ENCODE measurements at regions of chr17 and their contacts with region 1.

Region 1: DNA sequence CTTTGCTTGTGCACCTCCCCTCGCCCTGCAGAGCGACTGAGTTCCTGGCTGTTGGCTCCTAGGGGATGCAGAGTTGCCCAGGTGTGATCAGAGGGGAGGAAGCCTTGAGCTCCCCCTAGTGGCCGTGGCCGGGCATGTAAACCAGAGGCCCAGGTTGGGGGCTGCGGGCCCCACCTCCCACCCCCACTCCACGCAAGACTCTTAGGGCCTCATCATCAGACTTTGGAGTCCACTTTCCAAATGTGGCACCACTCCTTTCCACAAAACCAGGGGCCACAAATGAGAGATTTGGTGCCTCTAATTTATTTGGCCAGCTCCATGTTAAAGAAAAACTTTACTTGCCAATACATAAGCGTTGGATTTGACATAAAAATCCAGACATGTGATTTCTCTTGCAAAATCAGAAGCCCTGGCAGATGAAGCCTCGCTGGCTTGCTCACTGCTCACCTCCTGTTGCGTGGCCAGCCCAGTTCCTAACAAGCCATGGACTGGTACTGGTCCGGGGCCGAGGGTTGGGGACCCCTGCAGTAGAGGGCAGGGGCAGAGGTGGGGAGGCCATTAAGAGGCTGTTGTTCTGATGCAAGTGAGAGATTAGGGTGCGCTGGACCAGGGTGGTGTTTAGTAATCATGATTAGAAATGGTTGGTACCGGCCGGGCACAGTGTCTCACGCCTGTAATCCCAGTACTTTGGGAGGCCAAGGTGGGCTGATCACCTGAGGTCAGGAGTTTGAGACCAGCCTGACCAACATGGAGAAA is 28.7 kb upstream of the GAS7 start:
- DNase-seq: peak; percentile 74
- ATAC-seq: peak; percentile 69
- H3K4me3 Mint-ChIP-seq: no peak overlapping the region
- H3K27ac Mint-ChIP-seq: no peak overlapping the region
- H3K4me1 Mint-ChIP-seq: no peaks in the 10 kb centered on the region
- H3K27me3 Mint-ChIP-seq: no peaks in the 10 kb centered on the region

Region 2: GRCh38 chr17:9924735-9925191 is 302.3 kb before region 1 on chr17:
- CTCF ChIA-PET with region 1: interaction called, 4 read pairs
- POLR2A ChIA-PET with region 1: no interaction called
- intact Hi-C with region 1: loop called in 1 of 2 experiments (anchors 1 kb)
- DNase-seq: no peak
- ATAC-seq: peak; percentile 58
- H3K4me3 Mint-ChIP-seq: no peak overlapping the region
- H3K27ac Mint-ChIP-seq: no peak overlapping the region
- H3K4me1 Mint-ChIP-seq: no peaks in the 10 kb centered on the region
- H3K27me3 Mint-ChIP-seq: no peaks in the 10 kb centered on the region

Region 3: DNA sequence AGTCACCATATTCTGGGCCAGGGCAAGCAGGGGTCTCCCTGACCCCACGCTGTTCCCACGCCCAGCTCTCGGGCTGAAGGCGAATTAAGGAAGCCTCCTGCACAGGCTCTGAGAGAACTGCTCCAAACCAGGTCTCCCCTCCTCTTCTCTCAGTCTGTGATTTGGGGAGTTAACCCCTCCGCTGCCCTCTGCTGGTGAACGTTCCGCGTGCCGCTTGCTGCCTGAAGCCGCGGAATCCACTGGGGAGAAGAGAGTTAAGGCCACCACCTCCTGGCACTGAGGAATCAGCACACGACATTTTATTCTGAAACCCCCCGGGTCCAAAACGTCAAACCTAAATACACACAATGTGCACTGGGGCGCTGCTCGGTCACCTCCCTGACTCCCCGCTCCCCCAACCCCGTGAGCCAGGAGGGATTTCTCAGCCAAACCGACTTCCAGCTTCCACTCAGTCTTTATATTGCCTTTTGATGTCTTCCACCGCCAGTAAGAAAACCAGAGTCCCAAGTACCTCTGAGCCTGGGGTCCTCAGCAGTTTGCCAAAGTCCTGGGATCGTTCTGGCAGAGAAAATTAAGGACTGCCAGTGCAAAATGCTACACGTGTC is 267.6 kb before region 1 on chr17:
- CTCF ChIA-PET with region 1: no interaction called
- POLR2A ChIA-PET with region 1: no interaction called
- intact Hi-C with region 1: loop called in 1 of 2 experiments (anchors 2 kb)
- DNase-seq: peak; percentile 71
- ATAC-seq: no peak
- H3K4me3 Mint-ChIP-seq: no peak overlapping the region
- H3K27ac Mint-ChIP-seq: no peak overlapping the region
- H3K4me1 Mint-ChIP-seq: no peaks in the 10 kb centered on the region
- H3K27me3 Mint-ChIP-seq: peaks cover 4% of the 10 kb centered on the region

Region 4: DNA sequence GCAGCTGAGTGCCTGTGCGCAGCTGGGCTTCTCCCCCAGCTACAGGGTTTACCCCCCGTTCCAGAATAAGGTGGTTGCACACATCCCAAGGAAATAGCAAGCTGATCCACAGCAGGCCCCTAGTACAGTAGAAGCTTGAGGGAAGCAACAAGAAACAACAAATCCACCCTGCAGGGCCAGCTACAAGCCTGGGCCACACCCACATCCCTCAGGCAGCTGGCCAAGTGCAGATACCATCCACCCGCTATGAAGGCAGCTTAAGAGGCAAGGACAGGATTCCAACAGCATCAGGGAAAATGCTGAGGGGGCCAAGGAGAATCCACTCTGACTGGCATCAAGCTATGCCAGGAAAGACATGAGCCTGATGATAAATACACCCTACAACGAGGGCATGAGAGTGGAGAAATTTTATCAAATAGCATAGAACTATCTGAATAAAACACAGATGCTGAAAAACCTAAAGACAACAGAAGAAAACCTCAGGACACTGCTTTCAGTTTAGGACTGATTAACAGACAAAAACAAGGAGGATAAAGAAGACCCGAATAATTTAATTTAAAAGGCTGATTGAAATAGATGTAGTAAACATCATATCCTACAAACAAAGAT is 255.0 kb before region 1 on chr17:
- CTCF ChIA-PET with region 1: interaction called, 5 read pairs
- POLR2A ChIA-PET with region 1: no interaction called
- intact Hi-C with region 1: loop called in 1 of 2 experiments (anchors 1 kb)
- DNase-seq: no peak
- ATAC-seq: no peak
- H3K4me3 Mint-ChIP-seq: no peak overlapping the region
- H3K27ac Mint-ChIP-seq: no peak overlapping the region
- H3K4me1 Mint-ChIP-seq: peaks cover under 1% of the 10 kb centered on the region
- H3K27me3 Mint-ChIP-seq: no peaks in the 10 kb centered on the region

Region 5: DNA sequence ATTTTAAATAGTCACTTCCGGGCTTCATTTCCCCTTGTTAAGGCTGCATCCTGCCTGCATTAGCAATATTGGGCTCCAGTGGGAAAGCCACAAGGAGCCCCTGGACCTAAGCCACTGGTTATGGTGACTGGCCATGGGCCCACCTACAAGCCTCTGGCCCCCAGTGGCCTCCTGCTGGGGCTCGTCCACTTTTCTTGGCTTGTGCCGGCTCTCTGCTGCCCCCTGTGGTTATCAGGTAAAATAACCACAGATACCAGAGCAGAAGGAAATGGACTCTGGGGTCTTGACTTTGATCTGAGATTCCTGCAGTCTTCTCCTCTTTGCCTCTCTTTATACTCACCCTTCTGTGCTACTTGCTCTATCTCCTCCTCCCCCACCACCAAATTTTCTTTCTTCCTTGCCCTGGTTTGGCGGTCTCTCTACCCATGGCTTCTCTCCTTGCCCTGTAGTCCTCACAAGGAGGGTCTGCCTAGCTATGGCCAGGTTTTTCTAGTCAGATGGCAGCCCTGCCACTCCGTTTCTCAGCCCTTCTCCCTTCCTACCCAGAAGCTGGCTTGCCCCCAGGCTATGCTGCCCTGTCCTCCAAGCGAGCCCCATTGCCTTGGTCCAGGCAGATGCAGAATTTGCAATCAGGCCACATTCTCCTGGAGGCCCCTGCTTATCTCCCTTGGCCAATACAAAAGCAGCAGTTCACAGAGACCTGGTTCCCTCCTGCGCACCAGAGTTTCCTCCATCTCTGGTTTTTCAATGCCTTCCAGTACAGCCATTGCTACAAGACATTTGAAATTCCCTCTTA is 239.1 kb before region 1 on chr17:
- CTCF ChIA-PET with region 1: no interaction called
- POLR2A ChIA-PET with region 1: no interaction called
- intact Hi-C with region 1: loop called in 1 of 2 experiments (anchors 5 kb)
- DNase-seq: peak; percentile 41
- ATAC-seq: no peak
- H3K4me3 Mint-ChIP-seq: no peak overlapping the region
- H3K27ac Mint-ChIP-seq: no peak overlapping the region
- H3K4me1 Mint-ChIP-seq: no peaks in the 10 kb centered on the region
- H3K27me3 Mint-ChIP-seq: no peaks in the 10 kb centered on the region

Region 6: GRCh38 chr17:10041916-10042588 is 185.1 kb before region 1 on chr17:
- CTCF ChIA-PET with region 1: no interaction called
- POLR2A ChIA-PET with region 1: no interaction called
- intact Hi-C with region 1: loop called in 1 of 2 experiments (anchors 5 kb)
- DNase-seq: no peak
- ATAC-seq: peak; percentile 51
- H3K4me3 Mint-ChIP-seq: no peak overlapping the region
- H3K27ac Mint-ChIP-seq: no peak overlapping the region
- H3K4me1 Mint-ChIP-seq: peaks cover 5% of the 10 kb centered on the region
- H3K27me3 Mint-ChIP-seq: no peaks in the 10 kb centered on the region

Region 7: DNA sequence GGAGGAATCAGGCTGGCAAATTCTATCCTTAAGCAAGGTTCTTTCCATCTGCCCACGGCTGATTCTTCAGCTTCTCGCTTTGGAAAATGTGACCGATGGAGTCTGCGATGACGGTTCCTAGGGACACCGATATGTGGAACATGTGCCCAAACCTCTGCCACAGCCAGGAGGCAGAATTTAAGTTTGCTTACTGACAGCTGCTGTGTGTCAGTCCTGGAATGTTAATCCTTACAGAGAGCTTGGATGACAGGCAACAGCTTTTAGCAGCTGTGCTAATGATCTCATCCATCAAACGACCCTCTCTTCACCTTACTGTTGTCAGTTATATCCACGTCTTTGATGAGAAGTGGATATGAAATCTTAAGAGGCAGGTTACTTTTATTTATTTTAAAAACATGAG is 157.1 kb after region 1 on chr17:
- CTCF ChIA-PET with region 1: no interaction called
- POLR2A ChIA-PET with region 1: no interaction called
- intact Hi-C with region 1: no loop called
- DNase-seq: no peak
- ATAC-seq: no peak
- H3K4me3 Mint-ChIP-seq: no peak overlapping the region
- H3K27ac Mint-ChIP-seq: no peak overlapping the region
- H3K4me1 Mint-ChIP-seq: no peaks in the 10 kb centered on the region
- H3K27me3 Mint-ChIP-seq: peaks cover 2% of the 10 kb centered on the region